H1 (cell line): ENCODE measurements at regions of chr1 and their contacts with region 1.

Region 1: GRCh38 chr1:27044613-27045151 is 32.0 kb upstream of the TENT5B start:
- DNase-seq: peak; percentile 70 to 99
- H3K4me3 ChIP-seq: peak overlapping the region in 3 of 4 experiments; percentile 12 to 39 (median 24); a peak in 4 of 8 replicates
- H3K27ac ChIP-seq: no peak overlapping the region
- H3K4me1 ChIP-seq: peaks cover 7 to 25% (median 12%) of the 10 kb centered on the region in 4 experiments
- H3K27me3 ChIP-seq: no peaks in the 10 kb centered on the region
- CTCF ChIP-seq: peak; percentile 94 to 100 (median 97)
- EP300 ChIP-seq: no peak
- POLR2A ChIP-seq: no peak
- RAD21 ChIP-seq: peak; percentile 99

Region 2: GRCh38 chr1:26970810-26971209 is 73.9 kb before region 1 on chr1:
- CTCF ChIA-PET with region 1: interaction called, 55 read pairs
- POLR2A ChIA-PET with region 1: interaction called, 3 read pairs
- DNase-seq: no peak
- H3K4me3 ChIP-seq: no peak overlapping the region
- H3K27ac ChIP-seq: no peak overlapping the region
- H3K4me1 ChIP-seq: peaks cover 0 to 6% (median 3%) of the 10 kb centered on the region in 4 experiments; a peak in 3 of 7 replicates
- H3K27me3 ChIP-seq: no peaks in the 10 kb centered on the region
- CTCF ChIP-seq: no peak
- EP300 ChIP-seq: no peak
- POLR2A ChIP-seq: no peak
- RAD21 ChIP-seq: no peak

Region 3: DNA sequence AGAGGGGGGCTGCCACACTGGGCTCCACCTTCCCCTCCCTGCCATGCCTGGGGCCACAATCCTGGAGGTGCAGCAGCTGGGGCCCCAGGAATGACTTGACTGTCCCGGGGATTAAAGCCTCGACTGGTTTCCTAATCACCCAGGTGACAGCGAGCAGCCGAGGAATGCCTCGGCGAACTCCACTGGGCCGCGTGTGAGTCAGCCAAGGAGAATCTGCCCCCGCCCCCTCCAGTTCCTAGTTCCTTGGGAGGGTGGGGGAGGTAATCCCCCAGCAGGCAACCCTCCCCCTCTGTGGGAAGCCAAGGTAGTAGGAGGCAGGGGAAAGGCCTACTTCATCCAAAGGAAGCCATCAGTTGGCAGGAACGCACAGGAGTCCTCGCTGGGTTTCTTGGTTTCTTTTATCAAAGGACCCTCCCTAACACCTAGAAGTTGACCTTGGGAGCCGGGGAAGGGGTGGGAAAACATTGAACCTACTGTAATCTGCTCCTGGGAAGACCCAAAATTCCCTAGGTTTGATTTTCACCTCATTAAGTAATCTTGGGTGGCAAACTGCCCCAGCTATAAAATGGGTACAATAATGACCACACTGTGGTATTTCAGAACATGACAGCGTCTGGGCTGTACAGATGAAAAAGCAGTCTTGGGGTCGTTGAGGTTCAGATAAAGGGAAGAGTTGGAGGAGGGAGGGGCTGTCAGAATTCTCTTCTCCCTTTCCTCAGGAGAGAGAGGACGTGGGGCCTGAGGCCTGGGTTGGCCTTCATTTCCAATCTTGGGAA is 33.5 kb before region 1 on chr1:
- CTCF ChIA-PET with region 1: interaction called, 52 read pairs
- POLR2A ChIA-PET with region 1: interaction called, 1,829 read pairs
- DNase-seq: peak in 1 of 2 experiments; percentile 85
- H3K4me3 ChIP-seq: peak overlapping the region; percentile 88 to 100 (median 92)
- H3K27ac ChIP-seq: peak overlapping the region; percentile 64; the same call in 1 of the 2 replicates
- H3K4me1 ChIP-seq: peaks cover 18 to 39% (median 33%) of the 10 kb centered on the region in 4 experiments
- H3K27me3 ChIP-seq: no peaks in the 10 kb centered on the region
- CTCF ChIP-seq: no peak
- EP300 ChIP-seq: no peak; a peak in 1 of 3 replicates
- POLR2A ChIP-seq: peak in 1 of 2 experiments; percentile 54; a peak in 1 of 3 replicates
- RAD21 ChIP-seq: no peak; a peak in 1 of 4 replicates

Region 4: GRCh38 chr1:27057801-27058625 is 13.3 kb after region 1 on chr1:
- CTCF ChIA-PET with region 1: interaction called, 121 read pairs
- POLR2A ChIA-PET with region 1: interaction called, 57 read pairs
- DNase-seq: peak in 1 of 2 experiments; percentile 65
- H3K4me3 ChIP-seq: peak overlapping the region in 2 of 4 experiments; percentile 11 to 31; a peak in 4 of 8 replicates
- H3K27ac ChIP-seq: peak overlapping the region; percentile 26; the same call in 1 of the 2 replicates
- H3K4me1 ChIP-seq: peaks cover 3 to 26% (median 19%) of the 10 kb centered on the region in 4 experiments
- H3K27me3 ChIP-seq: no peaks in the 10 kb centered on the region
- CTCF ChIP-seq: no peak
- EP300 ChIP-seq: no peak
- POLR2A ChIP-seq: 0 out of 3 replicates have a peak, but pooled peaks of 1 of the 2 experiments have one; percentile 27
- RAD21 ChIP-seq: no peak

Region 5: DNA sequence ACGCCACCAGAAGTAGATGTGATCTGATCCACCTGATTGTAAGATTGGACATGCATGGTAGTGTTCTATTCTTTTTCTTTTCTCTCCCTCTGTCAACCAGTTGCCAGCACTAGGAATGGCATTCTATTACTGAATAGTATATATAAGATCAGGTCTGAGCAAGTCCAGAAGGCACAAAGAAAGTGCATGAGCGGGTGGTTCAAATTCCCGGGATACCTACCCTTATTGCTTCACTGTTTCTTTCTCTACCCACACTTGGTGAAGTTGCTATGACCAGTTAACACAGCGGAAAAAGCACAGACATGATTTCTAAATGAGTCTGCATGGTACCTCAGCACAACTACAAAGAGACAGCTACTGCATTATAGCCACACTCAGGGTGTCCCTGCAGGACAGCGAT is 46.2 kb after region 1 on chr1:
- CTCF ChIA-PET with region 1: interaction called, 790 read pairs
- POLR2A ChIA-PET with region 1: interaction called, 23 read pairs
- DNase-seq: no peak
- H3K4me3 ChIP-seq: no peak overlapping the region
- H3K27ac ChIP-seq: no peak overlapping the region
- H3K4me1 ChIP-seq: no peaks in the 10 kb centered on the region
- H3K27me3 ChIP-seq: no peaks in the 10 kb centered on the region
- CTCF ChIP-seq: no peak
- EP300 ChIP-seq: no peak
- POLR2A ChIP-seq: no peak
- RAD21 ChIP-seq: no peak

Region 6: DNA sequence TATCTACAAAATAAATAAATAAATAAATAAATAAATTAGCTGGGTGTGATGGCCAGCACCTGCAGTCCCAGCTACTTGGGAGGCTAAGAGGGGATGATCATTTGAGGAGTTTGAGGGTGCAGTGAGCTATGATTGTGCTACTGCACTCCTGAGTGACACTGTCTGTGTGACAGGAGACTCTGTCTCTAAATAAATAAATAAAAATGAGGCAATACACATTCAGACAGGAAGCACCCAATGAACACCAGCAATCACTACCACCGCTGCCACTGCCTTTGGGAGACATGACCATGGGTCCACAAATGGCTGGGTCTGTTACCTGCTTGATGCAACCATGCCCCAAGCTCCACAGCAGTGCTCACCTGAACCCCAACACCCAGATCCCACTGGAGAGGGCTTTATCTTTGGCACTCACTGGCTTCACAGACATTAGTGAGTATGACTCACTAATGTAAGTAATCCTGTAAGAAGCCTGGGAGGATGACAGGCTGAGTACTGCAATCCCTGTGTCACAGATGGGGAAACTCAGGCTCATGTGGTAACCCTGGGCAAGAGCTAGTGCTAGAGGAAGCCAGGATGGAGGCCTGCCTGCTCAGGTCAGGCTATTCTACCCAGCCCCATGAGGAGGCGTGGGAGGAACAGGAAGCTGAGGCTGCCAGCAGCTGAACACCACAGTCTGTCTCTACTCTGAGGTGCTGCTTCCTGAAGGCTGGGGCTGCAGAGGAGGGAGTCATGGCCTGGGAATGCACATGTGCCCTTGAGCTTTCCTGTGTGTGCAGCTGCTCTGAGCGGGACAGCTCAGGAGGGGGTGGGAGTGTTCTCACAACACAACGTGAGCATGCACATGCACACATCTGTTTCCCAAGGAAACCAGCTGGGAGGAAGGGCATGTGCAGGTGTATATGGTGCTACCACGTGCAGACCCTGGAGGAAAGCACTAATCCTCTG is 67.2 kb after region 1 on chr1:
- CTCF ChIA-PET with region 1: interaction called, 68 read pairs
- POLR2A ChIA-PET with region 1: no interaction called
- DNase-seq: no peak
- H3K4me3 ChIP-seq: no peak overlapping the region
- H3K27ac ChIP-seq: no peak overlapping the region
- H3K4me1 ChIP-seq: no peaks in the 10 kb centered on the region
- H3K27me3 ChIP-seq: no peaks in the 10 kb centered on the region
- CTCF ChIP-seq: peak in 1 of 3 experiments; percentile 20; a peak in 2 of 4 replicates
- EP300 ChIP-seq: no peak
- POLR2A ChIP-seq: no peak
- RAD21 ChIP-seq: peak in 1 of 2 experiments; percentile 43; a peak in 1 of 4 replicates